HAP-1 (cell line): ENCODE measurements at regions of chr7 and their contacts with region 1.

Region 1: DNA sequence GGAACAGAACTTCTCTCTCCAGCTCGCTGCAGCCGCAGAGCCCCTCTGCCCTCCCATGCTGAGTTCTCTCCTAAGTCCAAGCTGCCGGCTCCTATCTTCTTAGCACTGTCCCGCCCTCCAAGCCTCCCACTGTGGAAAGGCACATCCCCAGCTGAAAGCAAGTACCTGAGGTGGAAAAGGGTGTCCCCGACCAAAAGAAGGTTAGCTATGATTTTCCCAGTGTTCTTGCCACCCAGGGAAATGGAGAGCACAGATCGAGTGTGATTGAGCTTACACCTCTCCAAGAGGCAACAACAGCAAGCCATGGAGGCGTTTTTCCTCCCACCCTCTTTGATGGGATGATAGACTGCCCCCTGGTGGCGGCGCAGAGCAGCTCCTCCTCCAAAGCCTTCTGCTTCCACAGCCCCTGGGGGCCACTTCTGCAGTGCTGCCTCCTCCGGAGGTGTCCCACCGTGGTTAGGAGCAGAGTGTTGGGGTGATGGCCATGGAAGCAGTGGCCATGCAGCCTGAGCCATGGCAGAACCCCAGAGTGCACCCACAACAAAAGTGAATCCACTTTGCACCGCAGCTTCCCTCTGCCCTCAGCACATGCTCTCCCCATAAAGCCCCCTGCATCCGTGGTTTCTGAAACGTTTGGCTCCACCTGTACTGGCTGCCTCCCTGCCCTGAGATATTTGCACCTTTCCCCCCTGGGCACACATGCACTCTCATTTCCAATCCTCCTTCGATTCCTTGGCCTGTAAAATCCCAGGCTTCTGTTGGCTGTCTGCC is 143.1 kb upstream of the STK17A start:
- DNase-seq: peak; percentile 48 to 78
- H3K4me3 ChIP-seq: no peak overlapping the region
- H3K4me1 ChIP-seq: no peaks in the 10 kb centered on the region
- H3K27me3 ChIP-seq: no peaks in the 10 kb centered on the region

Region 2: DNA sequence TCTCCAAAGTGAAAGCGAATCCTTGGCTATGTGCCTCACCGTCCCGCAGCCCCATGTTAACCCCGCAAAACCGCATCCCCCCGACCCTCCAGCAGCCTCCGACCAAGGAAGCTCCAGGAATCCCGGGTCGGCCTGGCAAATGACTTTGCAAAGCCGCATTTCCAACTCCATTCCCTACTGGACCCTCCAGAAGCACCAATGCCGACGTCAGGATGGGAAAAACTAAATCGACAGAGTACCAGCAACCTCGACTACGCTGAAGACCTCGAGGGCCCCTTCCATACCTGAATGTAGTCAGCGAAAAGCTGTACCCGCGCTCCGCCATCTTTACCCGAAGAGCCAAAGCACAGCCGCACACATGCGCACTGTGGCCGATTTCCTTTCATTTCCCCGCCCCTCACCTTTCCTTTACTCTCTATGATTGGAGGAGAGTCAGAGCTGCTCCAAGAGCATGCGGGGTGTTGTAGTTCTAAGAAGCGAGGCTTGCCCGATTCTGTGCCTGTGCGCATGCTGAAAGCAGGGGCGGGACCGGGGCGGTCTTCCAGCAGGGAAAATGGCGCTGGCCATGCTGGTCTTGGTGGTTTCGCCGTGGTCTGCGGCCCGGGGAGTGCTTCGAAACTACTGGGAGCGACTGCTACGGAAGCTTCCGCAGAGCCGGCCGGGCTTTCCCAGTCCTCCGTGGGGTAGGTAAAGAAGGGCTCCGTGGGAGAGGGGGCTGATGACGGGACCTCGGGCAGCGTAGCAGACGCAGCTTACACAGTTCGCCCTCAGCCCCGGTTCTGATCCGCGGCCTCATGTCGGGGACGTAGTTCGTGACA is 507.8 kb before region 1 on chr7 and contains the starts of genes MRPL32 and PSMA2:
- in situ Hi-C with region 1: loop called (anchors 25 kb)
- DNase-seq: peak; percentile 95 to 97
- H3K4me3 ChIP-seq: peak within 1 kb of the TSS; percentile 83
- H3K4me1 ChIP-seq: peaks cover 14% of the 10 kb centered on the region
- H3K27me3 ChIP-seq: no peaks in the 10 kb centered on the region

Region 3: DNA sequence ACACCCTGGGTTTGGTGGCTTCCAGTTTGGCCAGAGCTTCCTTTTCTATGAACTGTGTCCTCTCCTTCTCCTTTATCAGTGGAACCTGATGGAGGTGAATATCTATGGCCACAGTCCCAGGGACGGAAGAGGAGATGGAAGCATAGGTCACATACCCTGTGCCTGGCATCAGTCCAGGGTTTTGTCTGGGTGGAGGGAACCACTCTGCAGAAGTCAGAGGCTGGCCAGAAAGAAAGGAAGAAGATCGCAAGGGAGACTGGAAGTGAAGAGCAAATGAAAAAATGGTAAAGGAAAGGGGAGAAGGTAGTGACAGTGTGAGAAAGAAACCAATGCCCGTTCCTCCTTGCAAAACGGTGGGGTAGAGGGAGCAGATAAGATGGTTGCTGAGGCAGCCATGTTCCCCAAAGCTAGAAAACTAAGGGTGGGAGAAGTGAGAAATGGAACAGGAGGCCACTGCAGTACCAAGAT is 405.2 kb before region 1 on chr7:
- in situ Hi-C with region 1: no loop called
- DNase-seq: no peak
- H3K4me3 ChIP-seq: no peak overlapping the region
- H3K4me1 ChIP-seq: no peaks in the 10 kb centered on the region
- H3K27me3 ChIP-seq: no peaks in the 10 kb centered on the region

Region 4: DNA sequence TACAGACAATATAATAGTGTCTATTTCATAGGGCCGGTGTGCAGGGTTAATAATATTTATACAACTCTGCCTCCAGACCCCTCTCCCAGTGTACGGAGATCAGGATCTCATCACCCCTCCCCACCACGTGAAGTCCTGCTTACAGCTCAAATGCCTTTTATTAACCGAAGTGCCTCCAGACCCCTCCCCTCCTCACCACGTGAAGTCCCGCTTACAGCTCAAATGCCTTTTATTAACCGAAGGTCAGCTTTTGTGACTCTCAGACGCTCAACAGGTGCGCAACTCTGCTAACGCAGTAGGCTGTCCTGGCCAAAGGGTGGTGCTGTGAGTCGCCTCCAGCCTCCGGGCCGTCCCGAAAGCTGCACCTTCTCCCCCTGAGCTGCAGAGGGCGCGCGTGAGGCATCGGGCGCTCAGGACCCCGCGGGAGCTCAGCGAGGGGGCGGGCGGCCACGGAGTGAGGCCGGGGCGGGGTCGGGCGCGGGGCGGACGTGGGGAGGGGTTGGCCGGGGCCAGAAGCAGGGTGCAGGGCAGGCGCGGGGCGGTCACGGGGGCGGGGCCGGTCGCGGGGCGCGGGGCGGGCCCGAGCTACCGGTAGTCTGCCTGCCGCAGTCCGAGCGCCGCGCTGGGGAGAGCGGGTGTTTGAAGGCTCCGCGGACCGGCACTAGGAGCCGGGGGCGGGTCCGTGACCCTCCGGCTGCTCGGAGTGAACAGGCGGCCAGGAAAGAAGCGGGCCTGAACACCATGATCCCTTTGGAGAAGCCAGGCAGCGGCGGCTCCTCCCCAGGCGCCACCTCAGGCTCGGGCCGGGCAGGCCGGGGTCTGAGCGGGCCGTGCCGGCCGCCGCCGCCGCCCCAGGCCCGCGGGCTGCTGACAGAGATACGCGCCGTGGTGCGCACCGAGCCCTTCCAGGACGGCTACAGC is 142.9 kb after region 1 on chr7 and contains the start of gene STK17A:
- in situ Hi-C with region 1: no loop called
- DNase-seq: peak; percentile 82 to 91
- H3K4me3 ChIP-seq: peak within 1 kb of the TSS; percentile 69
- H3K4me1 ChIP-seq: peaks cover 5% of the 10 kb centered on the region; the same call in 1 of the 2 replicates
- H3K27me3 ChIP-seq: peaks cover 22% of the 10 kb centered on the region